Calu3 (cell line): ENCODE measurements at regions of chr2 and their contacts with region 1.

Region 1: GRCh38 chr2:105893011-105893995 is 148.6 kb downstream of the NCK2 start:
- DNase-seq: no peak
- H3K4me3 Mint-ChIP-seq: no peak overlapping the region
- H3K27ac Mint-ChIP-seq: no peak overlapping the region
- H3K4me1 Mint-ChIP-seq: peaks cover 13% of the 10 kb centered on the region
- H3K27me3 Mint-ChIP-seq: no peaks in the 10 kb centered on the region
- CTCF ChIP-seq: no peak

Region 2: GRCh38 chr2:105858868-105859693 is 34.2 kb before region 1 on chr2:
- CTCF ChIA-PET with region 1: no interaction called
- intact Hi-C with region 1: loop called (anchors 5 kb)
- DNase-seq: no peak
- H3K4me3 Mint-ChIP-seq: no peak overlapping the region
- H3K27ac Mint-ChIP-seq: no peak overlapping the region
- H3K4me1 Mint-ChIP-seq: peaks cover 32% of the 10 kb centered on the region
- H3K27me3 Mint-ChIP-seq: no peaks in the 10 kb centered on the region
- CTCF ChIP-seq: no peak

Region 3: GRCh38 chr2:106516436-106516835 is 623.1 kb after region 1 on chr2:
- CTCF ChIA-PET with region 1: no interaction called
- intact Hi-C with region 1: no loop called
- DNase-seq: no peak
- H3K4me3 Mint-ChIP-seq: no peak overlapping the region
- H3K27ac Mint-ChIP-seq: no peak overlapping the region
- H3K4me1 Mint-ChIP-seq: peaks cover 16% of the 10 kb centered on the region
- H3K27me3 Mint-ChIP-seq: peaks cover 16% of the 10 kb centered on the region
- CTCF ChIP-seq: no peak